ENCODE measurements at regions of chr14 and their contacts with region 1.

Region 1: DNA sequence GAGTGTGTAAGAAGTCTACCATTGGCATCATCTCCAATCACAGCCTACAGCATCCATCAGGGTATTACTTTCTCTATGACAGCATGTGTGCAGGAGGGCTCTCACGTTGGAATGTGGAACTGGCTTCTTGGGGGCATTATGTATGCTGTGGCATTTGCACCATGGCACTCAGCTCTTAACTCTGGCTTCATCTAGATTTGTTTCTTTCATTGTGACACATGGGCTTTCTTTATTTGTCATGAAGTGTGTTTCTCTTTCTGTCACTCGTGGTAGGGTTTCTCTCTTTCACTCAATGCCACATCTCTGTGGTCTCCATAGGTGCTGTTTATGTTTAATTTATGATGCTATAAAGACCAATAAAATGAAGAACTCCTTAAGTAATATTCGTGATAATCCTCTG is 191.2 kb upstream of the GARIN2 start:
- DNase-seq: no peak
- H3K4me3 Mint-ChIP-seq: no peak overlapping the region
- H3K27ac Mint-ChIP-seq: no peak overlapping the region
- H3K4me1 Mint-ChIP-seq: peaks cover 5% of the 10 kb centered on the region
- H3K27me3 Mint-ChIP-seq: no peaks in the 10 kb centered on the region

Region 2: GRCh38 chr14:66716227-66716626 is 281.8 kb before region 1 on chr14:
- intact Hi-C with region 1: loop called (anchors 1 kb)
- DNase-seq: no peak
- H3K4me3 Mint-ChIP-seq: peak overlapping the region; percentile 40
- H3K27ac Mint-ChIP-seq: no peak overlapping the region
- H3K4me1 Mint-ChIP-seq: peaks cover 47% of the 10 kb centered on the region
- H3K27me3 Mint-ChIP-seq: no peaks in the 10 kb centered on the region

Region 3: DNA sequence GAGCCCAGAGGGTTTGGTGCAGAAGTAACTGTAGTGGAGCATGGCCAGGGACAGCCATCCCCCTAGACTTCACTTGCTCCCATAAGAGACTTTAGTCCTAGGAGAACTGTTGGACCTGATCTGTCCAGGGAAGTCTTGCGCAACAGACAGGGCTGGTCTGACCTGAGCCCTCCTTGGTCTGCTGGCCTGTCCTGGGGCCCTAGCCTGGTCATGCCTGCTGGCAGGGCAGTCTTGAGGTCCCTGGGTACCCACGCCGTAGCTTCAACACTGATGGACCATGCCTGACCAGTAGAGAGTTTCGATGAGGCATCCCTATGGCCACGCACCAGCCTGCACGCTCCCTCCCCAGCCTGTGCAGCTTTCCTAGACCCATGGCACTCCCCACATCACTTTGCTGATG is 184.4 kb before region 1 on chr14:
- intact Hi-C with region 1: no loop called
- DNase-seq: no peak
- H3K4me3 Mint-ChIP-seq: no peak overlapping the region
- H3K27ac Mint-ChIP-seq: no peak overlapping the region
- H3K4me1 Mint-ChIP-seq: no peaks in the 10 kb centered on the region
- H3K27me3 Mint-ChIP-seq: no peaks in the 10 kb centered on the region

Region 4: GRCh38 chr14:67276131-67276530 is 278.1 kb after region 1 on chr14:
- intact Hi-C with region 1: no loop called
- DNase-seq: no peak
- H3K4me3 Mint-ChIP-seq: no peak overlapping the region
- H3K27ac Mint-ChIP-seq: no peak overlapping the region
- H3K4me1 Mint-ChIP-seq: peaks cover 3% of the 10 kb centered on the region
- H3K27me3 Mint-ChIP-seq: no peaks in the 10 kb centered on the region

Measured in activated CD4-positive, alpha-beta T cell treated with anti-CD3 and anti-CD28 coated beads, Interleukin-2, amount 10 ng/mL, durations not matched to agents 24 days and 14 days (primary cell).